Body of pancreas (tissue), 4 donors: ENCODE measurements at regions of chr11 and their contacts with region 1.

Region 1: GRCh38 chr11:122505304-122506006 is 150.1 kb upstream of the UBASH3B start:
- DNase-seq: peak; percentile 83 to 90 (median 84)
- ATAC-seq: peak; percentile 94
- H3K4me3 ChIP-seq: no peak overlapping the region
- H3K27ac ChIP-seq: no peak overlapping the region
- H3K4me1 ChIP-seq: no peaks in the 10 kb centered on the region
- H3K27me3 ChIP-seq: no peaks in the 10 kb centered on the region
- CTCF ChIP-seq: peak; percentile 69 to 92 (median 87)
- POLR2A ChIP-seq: no peak

Region 2: DNA sequence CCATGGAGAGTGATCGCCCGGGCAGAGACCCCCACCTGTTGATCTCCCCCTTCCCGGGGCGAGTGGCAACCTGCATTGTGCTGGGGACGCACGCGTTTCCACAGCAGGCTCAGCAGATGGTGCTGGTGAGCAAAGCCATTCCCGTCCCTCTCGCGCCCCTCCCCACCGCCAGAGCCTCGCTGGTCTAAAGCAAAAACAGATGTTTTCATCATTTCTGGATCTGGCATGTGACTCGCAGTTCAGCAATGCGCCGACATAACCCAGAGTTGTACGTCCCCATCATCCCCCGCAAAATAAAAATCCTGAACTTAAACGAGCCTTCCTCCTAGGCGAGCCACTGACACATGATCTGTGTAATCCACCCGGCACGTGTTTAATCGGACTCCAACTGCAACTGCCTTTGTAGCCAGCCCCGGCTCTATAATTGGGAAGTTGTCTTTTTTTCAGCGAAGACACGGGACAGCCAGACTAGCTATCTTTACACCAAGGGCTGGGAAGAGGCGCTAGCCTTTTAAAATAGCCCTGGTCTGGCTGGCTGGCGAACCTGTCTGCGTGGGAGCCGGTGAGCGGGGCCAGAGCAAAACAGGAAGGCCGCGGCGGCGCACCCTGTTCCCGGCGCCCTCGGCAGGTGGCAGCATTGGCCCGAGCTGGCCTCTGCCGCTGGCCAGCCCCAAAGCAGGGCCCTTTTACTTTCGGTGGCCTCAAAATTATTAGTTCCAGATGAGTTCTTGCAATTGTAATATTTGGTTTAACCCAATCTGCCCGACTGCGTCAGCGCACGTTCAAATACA is 849.7 kb before region 1 on chr11:
- intact Hi-C with region 1: loop called (anchors 10 kb)
- DNase-seq: peak; percentile 81 to 87 (median 84)
- ATAC-seq: peak; percentile 90
- H3K4me3 ChIP-seq: peak overlapping the region in 1 of 2 donors; percentile 8
- H3K27ac ChIP-seq: peak overlapping the region; percentile 40 to 86 (median 78)
- H3K4me1 ChIP-seq: peaks cover 11% of the 10 kb centered on the region
- H3K27me3 ChIP-seq: no peaks in the 10 kb centered on the region
- CTCF ChIP-seq: peak; percentile 74 to 96 (median 85)
- POLR2A ChIP-seq: peak in 1 of 3 donors; percentile 32

Region 3: DNA sequence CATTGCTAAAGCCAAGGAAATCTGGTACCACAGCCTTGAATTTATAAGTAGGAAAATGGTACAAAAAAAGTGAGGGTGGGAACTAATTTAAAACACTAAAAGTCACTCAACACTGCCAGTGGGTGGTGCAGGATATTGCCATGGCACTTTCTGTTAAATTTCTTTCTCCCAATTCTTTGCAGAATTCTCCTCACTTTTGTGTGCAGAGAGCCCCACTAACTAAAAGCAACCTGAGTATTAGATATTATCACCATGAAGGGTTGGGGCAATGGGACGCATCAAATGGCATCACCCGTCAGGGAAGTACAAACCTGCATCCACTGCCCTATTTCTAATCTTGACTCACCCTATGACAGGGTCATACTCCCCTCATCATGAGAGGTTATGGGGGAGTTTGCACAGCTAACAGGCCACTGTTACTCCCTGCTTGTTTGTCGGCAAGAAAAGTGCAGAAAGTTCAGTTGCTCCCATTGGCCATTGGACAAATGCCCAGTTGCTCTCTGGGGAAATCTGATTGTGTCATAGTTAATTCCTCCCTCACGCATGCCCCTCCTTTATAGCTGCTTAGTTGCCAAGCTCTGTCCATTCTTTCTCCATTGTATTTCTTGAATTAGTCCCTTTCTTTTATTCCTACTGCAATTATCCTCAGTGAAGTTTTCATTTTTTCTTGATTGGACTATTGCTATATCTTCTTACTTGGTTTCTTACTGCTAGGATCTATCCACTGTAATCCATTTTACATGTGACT is 295.7 kb before region 1 on chr11:
- intact Hi-C with region 1: loop called (anchors 5 kb)
- DNase-seq: peak; percentile 44 to 56 (median 51)
- ATAC-seq: peak; percentile 57
- H3K4me3 ChIP-seq: no peak overlapping the region
- H3K27ac ChIP-seq: no peak overlapping the region
- H3K4me1 ChIP-seq: peaks cover 10% of the 10 kb centered on the region
- H3K27me3 ChIP-seq: no peaks in the 10 kb centered on the region
- CTCF ChIP-seq: no peak
- POLR2A ChIP-seq: no peak

Region 4: GRCh38 chr11:122215244-122215992 is 290.0 kb before region 1 on chr11:
- intact Hi-C with region 1: loop called (anchors 5 kb)
- DNase-seq: peak; percentile 69 to 80 (median 75)
- ATAC-seq: peak; percentile 87
- H3K4me3 ChIP-seq: no peak overlapping the region
- H3K27ac ChIP-seq: no peak overlapping the region
- H3K4me1 ChIP-seq: peaks cover 12% of the 10 kb centered on the region
- H3K27me3 ChIP-seq: no peaks in the 10 kb centered on the region
- CTCF ChIP-seq: peak; percentile 81 to 94 (median 92)
- POLR2A ChIP-seq: no peak

Region 5: GRCh38 chr11:122556605-122557004 is 51.1 kb after region 1 on chr11:
- intact Hi-C with region 1: no loop called
- DNase-seq: peak in 2 of 4 donors; percentile 16 to 48
- ATAC-seq: no peak
- H3K4me3 ChIP-seq: no peak overlapping the region
- H3K27ac ChIP-seq: no peak overlapping the region
- H3K4me1 ChIP-seq: no peaks in the 10 kb centered on the region
- H3K27me3 ChIP-seq: no peaks in the 10 kb centered on the region
- CTCF ChIP-seq: peak in 3 of 7 experiments; percentile 13 to 26 (median 15)
- POLR2A ChIP-seq: no peak

Region 6: DNA sequence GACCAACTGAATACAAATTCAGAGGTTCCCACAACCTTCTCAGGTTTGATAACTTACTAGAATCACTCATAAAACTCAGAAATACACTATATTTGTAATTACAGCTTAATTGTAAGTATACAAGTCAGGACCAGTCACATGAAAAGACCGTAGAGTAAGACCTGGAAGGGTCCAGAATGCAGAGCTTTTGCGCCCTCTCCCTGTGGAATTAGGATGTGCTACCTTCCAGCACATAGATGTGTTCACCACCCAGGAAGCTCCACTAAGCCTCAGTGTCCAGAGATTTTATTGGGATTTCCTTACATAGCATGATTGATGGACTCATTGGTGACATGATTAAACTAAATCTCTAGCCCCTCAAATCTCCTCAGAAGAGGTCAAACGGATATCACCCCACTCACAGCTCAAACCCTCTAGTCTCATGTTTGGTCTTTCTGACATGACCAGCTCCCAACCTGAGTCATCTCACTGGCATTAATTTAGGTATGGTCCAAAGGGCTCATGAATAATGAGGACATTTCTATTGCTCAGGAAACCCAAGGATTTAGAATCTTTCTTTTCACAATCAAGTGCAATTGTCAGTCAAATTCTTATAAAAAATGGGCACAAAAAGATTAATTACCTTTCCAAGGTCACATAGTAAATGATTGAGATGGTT is 72.8 kb after region 1 on chr11:
- intact Hi-C with region 1: no loop called
- DNase-seq: peak in 1 of 4 donors; percentile 20
- ATAC-seq: no peak
- H3K4me3 ChIP-seq: no peak overlapping the region
- H3K27ac ChIP-seq: no peak overlapping the region
- H3K4me1 ChIP-seq: no peaks in the 10 kb centered on the region
- H3K27me3 ChIP-seq: no peaks in the 10 kb centered on the region
- CTCF ChIP-seq: peak in 1 of 7 experiments; percentile 9
- POLR2A ChIP-seq: no peak